Transverse colon (tissue), 4 donors: ENCODE measurements at regions of chr16 and their contacts with region 1.

Region 1: DNA sequence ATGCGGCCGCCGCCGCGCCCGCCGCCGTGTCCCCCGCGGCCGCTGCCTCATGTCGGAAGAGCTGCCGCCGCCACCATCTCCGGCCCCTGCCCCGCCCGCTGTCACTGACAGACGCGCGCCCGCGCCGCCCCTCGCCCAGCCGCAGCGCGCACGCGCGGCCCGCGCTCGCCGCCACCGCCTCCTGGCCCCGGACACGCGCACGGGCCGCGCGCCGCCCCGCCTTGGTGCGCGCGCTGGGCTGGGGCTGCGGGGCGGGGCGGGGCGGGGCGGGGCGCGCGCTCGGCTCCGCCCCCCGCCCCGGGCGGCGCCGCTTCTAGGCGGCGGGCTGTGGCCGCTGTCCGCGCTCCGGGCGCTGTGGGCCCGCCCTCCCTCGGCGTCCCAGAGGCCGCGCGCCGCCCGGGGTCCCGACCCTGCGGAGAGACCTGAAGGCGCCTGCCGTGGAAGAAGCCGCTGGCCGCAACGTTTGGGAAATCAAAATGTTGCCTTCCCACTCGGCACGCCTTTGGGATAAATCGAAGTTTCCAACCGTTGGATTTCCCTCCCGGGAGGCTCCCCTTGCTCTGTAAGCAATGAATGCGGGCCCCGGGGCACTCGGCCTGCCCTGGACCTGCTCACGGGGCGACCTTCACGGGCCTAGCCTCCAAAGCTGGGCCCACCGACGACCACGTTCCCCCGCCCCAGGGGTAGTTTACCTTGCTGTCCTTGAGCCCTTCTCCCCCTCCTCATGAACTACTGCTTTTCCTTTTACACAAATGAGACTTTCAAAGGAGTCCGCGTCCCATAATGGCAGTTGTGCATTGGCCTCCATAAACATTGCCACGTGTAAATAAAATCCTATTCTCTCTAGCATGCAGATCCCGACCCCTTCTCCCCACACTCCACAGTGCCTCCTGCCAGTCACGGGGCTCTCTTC is at the start of gene ADCY9:
- DNase-seq: peak; percentile 82
- H3K4me3 ChIP-seq: peak within 1 kb of the TSS; percentile 61 to 83 (median 70)
- H3K27ac ChIP-seq: peak within 1 kb of the TSS; percentile 81 to 85 (median 82)
- H3K4me1 ChIP-seq: peaks cover 4 to 46% (median 38%) of the 10 kb centered on the region in 4 donors
- H3K27me3 ChIP-seq: no peaks in the 10 kb centered on the region
- CTCF ChIP-seq: no peak
- EP300 ChIP-seq: no peak
- POLR2A ChIP-seq: peak; percentile 41
- total RNA-seq, gene ADCY9: 33.7 to 46.0 (median 37.2) TPM

Region 2: GRCh38 chr16:3727806-3728381 is 388.7 kb before region 1 on chr16:
- in situ Hi-C with region 1: no loop called
- intact Hi-C with region 1: no loop called
- DNase-seq: no peak
- H3K4me3 ChIP-seq: no peak overlapping the region
- H3K27ac ChIP-seq: no peak overlapping the region
- H3K4me1 ChIP-seq: no peaks in the 10 kb centered on the region
- H3K27me3 ChIP-seq: no peaks in the 10 kb centered on the region
- CTCF ChIP-seq: no peak
- EP300 ChIP-seq: no peak
- POLR2A ChIP-seq: no peak

Region 3: GRCh38 chr16:3938848-3939624 is 177.6 kb before region 1 on chr16:
- in situ Hi-C with region 1: no loop called
- intact Hi-C with region 1: loop called (anchors 5 kb)
- DNase-seq: peak; percentile 30
- H3K4me3 ChIP-seq: peak overlapping the region; percentile 6 to 47 (median 24)
- H3K27ac ChIP-seq: no peak overlapping the region
- H3K4me1 ChIP-seq: peaks cover 4 to 9% (median 7%) of the 10 kb centered on the region in 4 donors
- H3K27me3 ChIP-seq: no peaks in the 10 kb centered on the region
- CTCF ChIP-seq: peak; percentile 74 to 98 (median 92)
- EP300 ChIP-seq: no peak
- POLR2A ChIP-seq: no peak

Region 4: DNA sequence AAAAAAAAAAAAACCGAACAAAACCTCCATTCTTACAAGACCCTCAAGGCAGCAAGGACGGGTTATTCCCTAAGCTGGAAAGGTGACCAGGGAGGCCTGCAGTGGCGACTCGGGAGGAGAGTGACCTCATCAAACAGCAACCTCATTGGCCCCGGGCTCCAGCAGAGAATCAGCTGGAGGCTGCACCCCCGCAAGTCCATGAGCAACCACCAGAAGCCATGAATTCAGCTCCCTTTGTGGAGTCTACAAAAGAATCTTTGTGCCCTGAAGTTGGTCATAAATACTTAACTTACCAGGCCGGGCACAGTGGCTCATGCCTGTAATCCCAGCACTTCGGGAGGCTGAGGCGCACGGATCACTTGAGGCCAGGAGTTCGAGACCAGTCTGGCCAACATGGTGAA is 155.1 kb before region 1 on chr16:
- in situ Hi-C with region 1: no loop called
- intact Hi-C with region 1: loop called (anchors 10 kb)
- DNase-seq: no peak
- H3K4me3 ChIP-seq: peak overlapping the region in 2 of 4 donors; percentile 23 to 49
- H3K27ac ChIP-seq: peak overlapping the region; percentile 65 to 77 (median 74)
- H3K4me1 ChIP-seq: peaks cover 5 to 19% (median 7%) of the 10 kb centered on the region in 4 donors
- H3K27me3 ChIP-seq: peaks cover 16% of the 10 kb centered on the region
- CTCF ChIP-seq: no peak
- EP300 ChIP-seq: no peak
- POLR2A ChIP-seq: no peak

Region 5: GRCh38 chr16:3999479-4000325 is 116.9 kb before region 1 on chr16:
- in situ Hi-C with region 1: loop called in 2 of 4 experiments (anchors 25 kb)
- intact Hi-C with region 1: no loop called
- DNase-seq: no peak
- H3K4me3 ChIP-seq: no peak overlapping the region
- H3K27ac ChIP-seq: peak overlapping the region; percentile 40 to 67 (median 46)
- H3K4me1 ChIP-seq: peaks cover 0 to 7% (median 3%) of the 10 kb centered on the region in 4 donors
- H3K27me3 ChIP-seq: no peaks in the 10 kb centered on the region
- CTCF ChIP-seq: no peak
- EP300 ChIP-seq: no peak
- POLR2A ChIP-seq: no peak

Region 6: GRCh38 chr16:4253394-4254150 is 137.0 kb after region 1 on chr16:
- in situ Hi-C with region 1: no loop called
- intact Hi-C with region 1: loop called (anchors 5 kb)
- DNase-seq: peak; percentile 100
- H3K4me3 ChIP-seq: peak overlapping the region; percentile 49 to 53 (median 52)
- H3K27ac ChIP-seq: peak overlapping the region; percentile 87 to 95 (median 92)
- H3K4me1 ChIP-seq: peaks cover 0 to 7% (median 0%) of the 10 kb centered on the region in 4 donors
- H3K27me3 ChIP-seq: no peaks in the 10 kb centered on the region
- CTCF ChIP-seq: no peak
- EP300 ChIP-seq: no peak
- POLR2A ChIP-seq: peak; percentile 91